Sigmoid colon (tissue), 7 donors: ENCODE measurements at regions of chr17 and their contacts with region 1.

Region 1: DNA sequence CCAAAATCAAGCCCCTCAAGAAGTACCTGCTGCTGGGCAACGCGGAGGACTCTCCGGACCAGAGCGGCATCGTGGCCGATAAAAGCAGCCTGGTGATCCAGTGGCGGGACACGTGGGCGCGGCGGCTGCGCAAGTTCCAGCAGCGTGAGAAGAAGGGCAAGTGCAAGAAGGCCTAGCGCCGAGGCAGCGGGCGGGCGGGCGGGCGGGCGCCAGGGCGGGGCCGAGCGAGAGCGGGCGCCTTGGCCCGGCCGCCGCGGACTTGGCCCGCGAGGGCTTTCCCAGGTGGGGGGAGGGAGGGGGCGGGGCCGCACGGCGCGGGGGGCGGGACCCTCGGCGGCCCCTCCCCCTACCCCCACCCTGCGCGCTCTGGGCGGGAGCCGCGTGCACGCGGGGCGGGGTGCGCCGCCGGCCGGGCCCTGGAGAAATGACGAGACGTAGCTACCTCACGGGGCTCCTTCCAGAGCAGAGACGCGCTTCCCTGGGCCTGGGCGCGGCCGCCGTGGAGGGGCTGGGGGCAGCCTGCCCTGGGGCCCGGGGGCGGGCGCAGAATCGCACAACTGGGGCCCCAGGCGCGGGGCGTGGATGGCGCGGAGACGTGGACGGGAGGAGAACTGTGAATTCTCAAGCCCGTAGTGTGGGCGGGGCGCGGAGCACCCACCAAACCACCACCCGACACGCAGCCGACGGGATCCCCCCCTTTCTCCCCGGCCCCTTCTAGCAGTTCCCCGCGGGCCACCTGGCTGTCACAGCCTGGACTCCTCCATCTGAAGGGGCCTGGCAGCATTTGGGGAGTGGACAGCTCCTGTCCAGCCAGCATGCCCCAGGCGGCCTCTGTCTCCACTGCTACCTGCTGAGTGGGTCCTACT is 218.7 kb downstream of the NTN1 start:
- DNase-seq: peak; percentile 93
- H3K4me3 ChIP-seq: peak overlapping the region; percentile 27 to 54 (median 51)
- H3K27ac ChIP-seq: peak overlapping the region; percentile 92 to 96 (median 95)
- H3K4me1 ChIP-seq: peaks cover 3 to 59% (median 55%) of the 10 kb centered on the region in 4 donors
- H3K27me3 ChIP-seq: no peaks in the 10 kb centered on the region
- CTCF ChIP-seq: no peak
- EP300 ChIP-seq: no peak
- POLR2A ChIP-seq: peak in 1 of 2 donors; percentile 40

Region 2: DNA sequence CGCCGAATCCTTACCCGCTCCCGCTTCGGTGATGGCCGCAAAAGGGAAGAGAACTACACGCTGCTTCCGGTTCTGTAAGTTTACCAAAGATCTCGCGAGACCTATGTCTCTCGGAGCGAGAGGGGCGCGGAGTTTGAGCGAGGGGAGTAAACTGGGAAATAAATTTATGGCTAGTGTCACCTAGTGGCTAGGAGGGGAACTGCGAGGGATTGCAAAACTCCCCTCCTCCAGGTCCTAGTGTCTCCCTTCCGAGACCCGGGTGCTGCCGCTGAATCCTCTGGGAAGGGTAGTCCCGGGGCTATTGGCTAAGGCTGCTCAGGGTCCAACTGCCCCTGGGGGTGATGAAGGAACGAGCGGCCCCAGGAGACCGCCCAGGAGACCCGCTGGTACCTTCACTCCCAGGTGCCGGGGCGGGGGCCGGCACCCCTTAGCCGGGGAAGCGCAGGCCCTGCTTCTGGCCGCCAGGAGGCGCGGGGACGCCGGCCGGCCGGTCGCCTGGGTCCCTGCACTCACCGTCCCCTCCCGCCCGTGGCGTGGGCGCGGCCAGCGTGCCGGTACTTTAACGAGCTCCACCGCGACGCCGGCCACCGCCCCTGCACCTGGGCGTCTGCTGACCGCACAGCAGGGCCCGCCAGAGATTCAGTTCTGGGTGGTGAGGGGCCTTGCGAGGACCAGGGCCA is 856.7 kb before region 1 on chr17 and contains the start of gene RPL26:
- intact Hi-C with region 1: loop called (anchors 5 kb)
- DNase-seq: peak; percentile 99
- H3K4me3 ChIP-seq: peak within 1 kb of the TSS; percentile 64 to 84 (median 72)
- H3K27ac ChIP-seq: peak within 1 kb of the TSS; percentile 87 to 94 (median 92)
- H3K4me1 ChIP-seq: peaks cover 0 to 46% (median 34%) of the 10 kb centered on the region in 4 donors
- H3K27me3 ChIP-seq: no peaks in the 10 kb centered on the region
- CTCF ChIP-seq: peak; percentile 97 to 100 (median 98)
- EP300 ChIP-seq: no peak
- POLR2A ChIP-seq: no peak
- total RNA-seq, gene RPL26: 3,681 to 6,264 (median 5,219) TPM

Region 3: DNA sequence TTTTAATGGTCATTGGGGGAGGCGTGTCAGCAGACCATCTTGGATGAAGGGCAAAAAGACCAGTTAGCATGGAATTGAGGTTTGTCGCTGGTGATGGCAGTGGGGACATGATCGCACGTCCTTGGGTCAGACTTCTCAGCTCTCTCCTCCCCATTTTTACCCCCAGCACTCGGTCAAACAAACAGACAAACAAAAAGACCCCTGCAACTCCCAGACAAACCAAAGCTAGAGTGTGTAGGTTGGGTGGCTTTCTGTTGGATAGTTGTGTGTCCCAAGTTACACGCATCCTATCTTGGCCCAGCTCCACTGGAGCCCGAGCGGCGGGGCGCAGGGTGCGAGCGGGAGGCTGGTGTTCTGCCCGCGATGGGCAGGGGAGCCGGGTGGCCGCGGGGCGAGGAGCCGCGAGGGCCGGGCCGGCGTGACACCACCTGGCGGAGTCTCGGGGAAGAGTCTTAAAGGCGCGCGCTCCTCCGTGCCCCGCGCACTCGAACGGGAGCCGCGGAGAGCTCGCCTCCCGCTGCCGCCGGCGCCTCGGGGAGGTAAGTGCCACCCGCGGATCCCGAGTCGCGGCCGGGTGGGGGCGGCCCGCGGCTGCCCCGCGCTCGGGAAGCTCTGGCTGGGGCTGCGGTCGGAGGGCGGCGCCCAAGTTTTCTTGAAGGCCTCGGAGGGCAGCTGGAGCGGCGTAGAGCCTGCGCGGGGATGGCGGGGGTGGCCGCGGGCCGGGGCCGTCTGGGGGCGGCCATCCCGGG is 237.2 kb before region 1 on chr17:
- intact Hi-C with region 1: loop called (anchors 2 kb)
- DNase-seq: no peak
- H3K4me3 ChIP-seq: peak overlapping the region; percentile 28 to 70 (median 56)
- H3K27ac ChIP-seq: peak overlapping the region; percentile 51 to 74 (median 58)
- H3K4me1 ChIP-seq: peaks cover 0 to 48% (median 26%) of the 10 kb centered on the region in 4 donors
- H3K27me3 ChIP-seq: peaks cover 0 to 13% (median 8%) of the 10 kb centered on the region in 3 donors
- CTCF ChIP-seq: peak in 2 of 4 experiments; percentile 24 to 48
- EP300 ChIP-seq: no peak
- POLR2A ChIP-seq: no peak

Region 4: GRCh38 chr17:9021158-9021991 is 218.7 kb before region 1 on chr17 and contains the start of gene NTN1:
- intact Hi-C with region 1: loop called (anchors 5 kb)
- DNase-seq: peak; percentile 80
- H3K4me3 ChIP-seq: peak within 1 kb of the TSS; percentile 56 to 83 (median 74)
- H3K27ac ChIP-seq: peak within 1 kb of the TSS; percentile 79 to 92 (median 86)
- H3K4me1 ChIP-seq: peaks cover 0 to 32% (median 26%) of the 10 kb centered on the region in 4 donors
- H3K27me3 ChIP-seq: peaks cover 0 to 12% (median 0%) of the 10 kb centered on the region in 3 donors
- CTCF ChIP-seq: no peak
- EP300 ChIP-seq: peak in 1 of 4 donors; percentile 17
- POLR2A ChIP-seq: no peak
- total RNA-seq, gene NTN1: 10.5 to 20.3 (median 16.3) TPM

Region 5: DNA sequence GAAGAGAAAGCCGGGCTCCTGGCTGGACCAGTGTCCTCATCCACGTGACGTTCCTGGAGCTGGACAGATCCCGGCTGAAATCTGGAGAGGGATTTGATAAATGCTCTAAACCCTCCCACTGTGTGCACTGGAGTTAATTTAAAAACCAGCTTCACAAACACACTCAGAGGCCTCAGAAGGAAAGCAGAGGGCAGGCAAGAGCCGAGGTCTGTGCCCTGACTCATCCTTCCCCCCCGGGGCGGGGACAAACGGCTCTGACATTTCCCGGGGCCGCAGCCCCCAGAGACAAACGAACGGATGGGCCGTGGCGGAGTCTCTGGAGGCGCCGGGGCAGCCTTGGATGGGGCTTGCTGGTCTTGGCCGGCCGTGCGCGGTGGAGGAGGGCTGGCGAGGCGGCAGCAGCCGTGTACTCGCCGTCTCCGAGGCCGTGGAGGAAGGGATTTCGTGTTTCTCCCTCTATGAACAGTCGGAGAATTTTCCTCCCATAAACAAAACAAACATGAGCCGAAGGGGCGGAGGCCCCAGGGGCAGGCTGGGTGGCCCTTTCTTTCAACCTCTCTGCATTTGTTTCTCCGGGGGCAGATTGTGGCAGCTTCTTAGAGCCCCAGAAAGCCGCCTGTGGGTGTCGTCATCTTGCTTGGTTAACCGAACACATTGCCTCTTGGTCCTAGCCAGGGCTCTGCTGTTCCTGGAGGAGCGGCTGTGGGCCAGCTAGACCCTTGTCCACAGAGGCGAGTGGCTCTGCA is 124.4 kb before region 1 on chr17:
- intact Hi-C with region 1: loop called (anchors 5 kb)
- DNase-seq: peak; percentile 86
- H3K4me3 ChIP-seq: peak overlapping the region; percentile 5 to 39 (median 36)
- H3K27ac ChIP-seq: peak overlapping the region; percentile 67 to 79 (median 74)
- H3K4me1 ChIP-seq: peaks cover 0 to 20% (median 15%) of the 10 kb centered on the region in 4 donors
- H3K27me3 ChIP-seq: no peaks in the 10 kb centered on the region
- CTCF ChIP-seq: no peak
- EP300 ChIP-seq: no peak
- POLR2A ChIP-seq: no peak

Region 6: DNA sequence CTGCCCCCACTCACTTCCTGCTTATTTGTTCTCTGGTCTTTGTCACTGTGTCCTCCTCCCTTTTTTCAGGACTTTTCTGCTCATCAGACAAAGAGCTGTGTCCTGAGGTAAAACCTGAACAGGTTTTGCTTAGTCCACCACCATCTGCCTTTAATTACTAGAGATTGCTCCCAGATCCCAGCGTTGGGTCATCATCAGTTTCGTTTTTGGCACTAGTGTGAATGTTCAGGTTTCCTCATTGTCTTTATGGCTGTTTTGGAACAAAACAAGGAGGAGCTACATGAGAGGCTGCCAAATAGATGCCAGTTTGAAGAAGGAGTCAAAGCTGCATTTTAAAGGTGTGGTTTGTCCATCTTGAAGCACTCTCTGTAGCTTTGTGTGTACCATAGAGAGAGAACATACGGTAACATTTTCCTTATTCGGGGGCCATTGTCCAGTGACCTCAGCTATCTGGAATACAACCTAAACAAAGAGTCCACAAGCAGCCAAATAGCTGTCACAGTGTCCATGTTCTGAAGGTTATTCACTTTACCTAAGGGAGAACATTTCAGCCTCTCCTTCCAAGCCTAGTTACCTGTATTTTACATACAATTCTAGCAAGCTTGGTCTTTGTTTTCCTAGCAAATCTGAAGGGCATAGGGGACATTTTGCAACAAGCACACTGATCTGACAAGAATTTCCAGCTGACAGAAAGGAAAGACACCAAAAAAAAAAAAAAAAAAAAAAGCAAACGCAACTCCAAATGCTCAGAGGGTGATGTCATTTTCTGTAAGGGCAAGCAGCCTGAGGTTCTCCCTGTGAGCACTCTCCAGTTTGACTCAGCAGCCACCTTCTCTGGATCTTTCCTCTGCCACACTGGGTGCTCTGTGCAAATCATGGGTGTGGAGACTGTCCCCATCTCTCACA is 22.6 kb before region 1 on chr17:
- intact Hi-C with region 1: no loop called
- DNase-seq: peak; percentile 60
- H3K4me3 ChIP-seq: no peak overlapping the region
- H3K27ac ChIP-seq: peak overlapping the region in 3 of 4 donors; percentile 33 to 81 (median 42)
- H3K4me1 ChIP-seq: peaks cover 0 to 18% (median 10%) of the 10 kb centered on the region in 4 donors
- H3K27me3 ChIP-seq: no peaks in the 10 kb centered on the region
- CTCF ChIP-seq: no peak
- EP300 ChIP-seq: no peak
- POLR2A ChIP-seq: no peak

Region 7: GRCh38 chr17:9291912-9292560 is 52.0 kb after region 1 on chr17:
- intact Hi-C with region 1: loop called (anchors 2 kb)
- DNase-seq: peak; percentile 83
- H3K4me3 ChIP-seq: no peak overlapping the region
- H3K27ac ChIP-seq: peak overlapping the region; percentile 65 to 75 (median 72)
- H3K4me1 ChIP-seq: peaks cover 0 to 34% (median 31%) of the 10 kb centered on the region in 4 donors
- H3K27me3 ChIP-seq: no peaks in the 10 kb centered on the region
- CTCF ChIP-seq: peak; percentile 61 to 79 (median 72)
- EP300 ChIP-seq: peak in 3 of 4 donors; percentile 50 to 57 (median 54)
- POLR2A ChIP-seq: no peak